ENCODE measurements at regions of chr3 and their contacts with region 1.

Region 1: GRCh38 chr3:187223799-187224198 is 26.5 kb downstream of the RTP1 start:
- DNase-seq: no peak
- ATAC-seq: no peak
- H3K4me3 ChIP-seq: no peak overlapping the region
- H3K27ac ChIP-seq: no peak overlapping the region
- H3K4me1 ChIP-seq: no peaks in the 10 kb centered on the region
- H3K27me3 ChIP-seq: no peaks in the 10 kb centered on the region
- CTCF ChIP-seq: no peak

Region 2: DNA sequence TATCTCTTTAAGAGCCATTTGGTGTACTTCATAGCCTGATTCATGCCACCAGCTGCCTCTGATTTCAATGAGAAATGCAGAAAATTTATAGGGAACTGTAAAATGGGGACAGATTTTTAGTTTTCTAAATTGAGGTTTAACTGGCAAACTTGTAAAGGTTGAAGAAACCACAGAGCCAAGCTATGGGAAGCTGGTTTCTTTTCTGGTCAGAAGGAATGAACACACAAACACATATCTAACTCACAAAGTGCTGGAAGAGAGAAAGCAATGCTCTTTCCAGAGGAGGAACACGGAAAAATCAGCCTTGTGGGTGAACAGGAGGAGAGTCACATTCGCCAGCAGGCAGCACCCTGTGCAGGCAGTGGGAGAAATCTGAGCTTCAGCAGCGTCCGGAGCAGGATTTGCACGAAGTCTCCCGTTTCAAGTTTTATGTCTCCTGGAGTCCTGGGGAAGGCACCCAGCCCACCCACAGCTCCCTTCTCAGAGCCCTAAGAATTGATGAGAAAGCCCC is 67.3 kb after region 1 on chr3:
- intact Hi-C with region 1: loop called in 1 of 2 experiments (anchors 5 kb)
- DNase-seq: peak in 1 of 2 donors; percentile 62
- ATAC-seq: peak in 3 of 4 donors; percentile 41 to 70 (median 56)
- H3K4me3 ChIP-seq: no peak overlapping the region
- H3K27ac ChIP-seq: no peak overlapping the region
- H3K4me1 ChIP-seq: no peaks in the 10 kb centered on the region
- H3K27me3 ChIP-seq: no peaks in the 10 kb centered on the region
- CTCF ChIP-seq: no peak

Region 3: DNA sequence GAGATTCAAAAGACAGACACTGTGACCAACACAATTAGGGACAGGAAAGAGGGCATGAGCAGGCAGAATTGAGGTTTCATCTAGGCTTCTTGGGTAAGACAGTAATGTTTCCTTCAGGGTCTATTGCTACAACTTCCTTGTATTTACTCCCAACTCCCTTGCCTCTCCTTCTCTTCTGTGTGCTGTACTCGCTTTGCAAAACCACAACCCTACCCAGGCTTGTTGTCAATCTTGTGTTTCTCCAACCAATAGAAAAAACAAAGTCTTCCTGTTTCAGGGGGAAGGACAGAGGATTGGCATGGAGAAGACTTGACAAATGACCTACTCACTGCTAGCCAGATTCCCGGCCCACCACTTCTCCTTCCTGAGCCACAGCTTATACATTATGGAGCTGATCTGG is 104.0 kb after region 1 on chr3:
- intact Hi-C with region 1: no loop called
- DNase-seq: no peak
- ATAC-seq: no peak
- H3K4me3 ChIP-seq: no peak overlapping the region
- H3K27ac ChIP-seq: no peak overlapping the region
- H3K4me1 ChIP-seq: no peaks in the 10 kb centered on the region
- H3K27me3 ChIP-seq: peaks cover 0 to 9% (median 0%) of the 10 kb centered on the region in 3 donors
- CTCF ChIP-seq: no peak

Region 4: DNA sequence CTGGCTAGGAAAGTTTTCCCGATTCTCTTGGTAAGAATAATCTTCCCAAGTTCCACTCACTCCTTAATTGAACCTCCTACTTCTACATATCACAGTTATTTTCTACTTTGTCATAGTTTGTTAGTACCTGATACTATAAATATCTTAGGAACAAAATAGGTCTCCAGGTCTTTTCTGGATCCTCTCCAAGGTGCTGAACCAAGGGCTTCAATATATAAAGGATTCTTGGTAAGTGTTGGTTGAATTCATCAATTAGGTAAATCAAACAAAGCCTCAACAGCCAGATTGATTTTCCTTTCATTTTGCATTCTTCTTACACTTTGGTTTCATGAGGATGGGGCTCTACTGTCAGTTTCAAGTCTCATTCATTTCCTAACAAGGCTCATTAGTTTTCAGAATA is 116.8 kb after region 1 on chr3:
- intact Hi-C with region 1: no loop called
- DNase-seq: no peak
- ATAC-seq: no peak
- H3K4me3 ChIP-seq: no peak overlapping the region
- H3K27ac ChIP-seq: no peak overlapping the region
- H3K4me1 ChIP-seq: no peaks in the 10 kb centered on the region
- H3K27me3 ChIP-seq: no peaks in the 10 kb centered on the region
- CTCF ChIP-seq: no peak

Region 5: DNA sequence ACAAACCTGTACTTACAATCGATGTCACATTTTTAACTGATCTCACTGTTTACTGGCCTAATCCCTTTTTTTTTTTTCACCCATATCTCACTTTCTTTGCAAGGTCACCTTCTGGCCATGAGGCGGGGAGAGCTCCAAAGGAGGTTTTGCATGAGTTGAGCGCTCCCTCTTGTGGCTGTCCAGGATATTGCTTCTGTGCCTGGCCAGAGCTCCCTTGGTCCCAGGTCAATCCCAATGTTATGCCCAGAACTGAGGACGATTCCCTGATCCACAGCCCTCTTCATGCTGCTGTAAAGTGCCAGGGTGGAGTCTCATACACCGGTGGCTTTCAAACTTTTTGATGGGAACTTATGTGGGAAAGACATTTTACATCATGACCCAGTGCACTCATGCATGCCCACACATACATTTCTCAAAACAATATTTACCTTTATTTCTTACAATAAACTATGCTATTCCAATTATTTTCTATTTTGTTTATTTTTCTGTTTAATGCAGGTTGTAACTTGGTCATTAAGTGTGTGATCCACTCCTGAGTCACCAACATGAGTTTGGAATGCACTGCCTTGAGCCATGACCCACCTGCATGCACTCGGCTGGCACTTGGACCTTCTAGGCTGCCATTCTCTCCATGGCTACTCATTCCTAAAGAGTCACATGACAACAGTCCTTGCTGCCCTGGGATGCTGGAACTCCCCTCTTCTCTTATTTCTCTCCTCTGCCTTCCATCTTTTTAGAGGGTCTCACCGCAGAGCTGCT is 456.0 kb after region 1 on chr3:
- intact Hi-C with region 1: loop called (anchors 1 to 2 kb)
- DNase-seq: peak; percentile 70 to 82
- ATAC-seq: peak; percentile 86 to 98 (median 90)
- H3K4me3 ChIP-seq: no peak overlapping the region
- H3K27ac ChIP-seq: no peak overlapping the region
- H3K4me1 ChIP-seq: no peaks in the 10 kb centered on the region
- H3K27me3 ChIP-seq: peaks cover 0 to 4% (median 2%) of the 10 kb centered on the region in 3 donors
- CTCF ChIP-seq: peak; percentile 95

Region 6: DNA sequence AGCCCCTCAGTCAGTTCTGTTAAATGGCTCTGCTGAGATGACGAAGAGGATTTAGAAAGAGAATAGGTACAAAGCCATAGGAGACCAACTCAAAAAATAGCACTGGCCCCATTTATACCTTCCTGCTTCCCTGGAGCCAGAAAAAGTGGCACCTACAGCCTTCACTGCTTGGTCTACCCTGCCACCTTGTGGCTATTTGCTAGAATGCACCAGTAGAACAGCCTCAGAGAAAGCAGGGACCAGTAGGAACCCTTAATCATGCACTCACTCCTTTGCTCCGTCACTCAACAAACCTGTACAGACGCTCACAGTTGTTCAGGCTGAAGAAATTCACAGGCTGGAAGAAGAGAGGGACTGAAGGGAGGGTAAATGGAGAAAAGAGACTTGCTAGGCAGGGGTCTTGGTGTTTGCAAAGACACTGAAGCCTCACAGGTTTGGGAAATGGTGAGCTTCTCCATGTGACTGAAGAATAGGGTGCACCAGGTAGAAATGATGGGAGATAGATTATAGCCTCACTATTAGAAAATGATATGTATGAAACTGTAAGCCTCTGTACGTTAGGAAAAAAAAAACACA is 490.7 kb after region 1 on chr3:
- intact Hi-C with region 1: loop called in 1 of 2 experiments (anchors 2 kb)
- DNase-seq: no peak
- ATAC-seq: peak; percentile 79 to 86 (median 80)
- H3K4me3 ChIP-seq: no peak overlapping the region
- H3K27ac ChIP-seq: no peak overlapping the region
- H3K4me1 ChIP-seq: peaks cover 17% of the 10 kb centered on the region
- H3K27me3 ChIP-seq: no peaks in the 10 kb centered on the region
- CTCF ChIP-seq: peak; percentile 98